OCI-LY7 (cell line): ENCODE measurements at regions of chr13 and their contacts with region 1.

Region 1: GRCh38 chr13:97344265-97345175 is 89.4 kb upstream of the RAP2A start:
- DNase-seq: peak; percentile 20
- H3K4me3 ChIP-seq: no peak overlapping the region
- H3K27ac ChIP-seq: no peak overlapping the region
- H3K4me1 ChIP-seq: no peaks in the 10 kb centered on the region
- CTCF ChIP-seq: peak; percentile 72

Region 2: DNA sequence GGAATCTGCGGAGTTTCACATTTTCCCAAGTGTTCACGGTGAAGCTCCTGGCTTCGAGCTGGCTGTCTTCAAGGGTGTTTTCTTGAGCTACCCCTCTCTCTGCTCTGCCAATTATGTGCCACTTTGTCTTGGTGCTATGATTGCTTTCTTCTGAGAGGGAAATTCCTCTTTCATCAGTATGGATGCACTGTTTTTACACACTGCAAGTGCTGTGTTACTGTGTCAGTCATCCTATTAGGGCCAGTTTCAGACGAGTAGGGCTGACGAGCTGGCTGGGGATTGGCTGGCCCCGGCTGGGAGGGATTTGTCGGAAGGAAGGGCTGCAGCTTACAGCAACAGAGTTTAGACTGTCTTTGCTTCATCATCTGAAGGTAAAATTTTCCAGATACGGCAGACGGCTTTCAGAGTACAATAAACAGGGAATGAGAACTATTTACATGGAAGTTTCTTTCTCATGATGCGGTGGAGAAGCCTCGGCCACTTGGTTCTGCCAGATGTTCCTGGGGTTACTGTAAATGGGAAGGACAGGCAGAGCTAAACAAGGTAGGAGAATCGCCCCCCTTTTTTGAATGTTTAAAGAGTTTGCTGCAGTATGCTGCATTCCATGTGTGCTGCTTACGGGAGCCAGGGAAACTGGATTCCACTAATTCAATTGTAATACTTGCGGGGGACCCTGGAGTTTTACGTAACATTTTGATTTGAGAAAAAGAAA is 122.4 kb before region 1 on chr13 and contains the start of gene MBNL2:
- CTCF ChIA-PET with region 1: no interaction called
- POLR2A ChIA-PET with region 1: interaction called, 7 read pairs
- intact Hi-C with region 1: loop called (anchors 10 kb)
- DNase-seq: peak; percentile 74
- H3K4me3 ChIP-seq: peak within 1 kb of the TSS; percentile 89
- H3K27ac ChIP-seq: peak within 1 kb of the TSS; percentile 65
- H3K4me1 ChIP-seq: peaks cover 31% of the 10 kb centered on the region
- CTCF ChIP-seq: no peak
- total RNA-seq, gene MBNL2: 1.6 and 2.7 TPM in 2 replicates

Region 3: GRCh38 chr13:98083507-98083906 is 739.0 kb after region 1 on chr13:
- CTCF ChIA-PET with region 1: no interaction called
- POLR2A ChIA-PET with region 1: no interaction called
- intact Hi-C with region 1: no loop called
- DNase-seq: no peak
- H3K4me3 ChIP-seq: no peak overlapping the region
- H3K27ac ChIP-seq: no peak overlapping the region
- H3K4me1 ChIP-seq: no peaks in the 10 kb centered on the region
- CTCF ChIP-seq: no peak